Left cardiac atrium (tissue), 4 donors: ENCODE measurements at regions of chr17 and their contacts with region 1.

Region 1: DNA sequence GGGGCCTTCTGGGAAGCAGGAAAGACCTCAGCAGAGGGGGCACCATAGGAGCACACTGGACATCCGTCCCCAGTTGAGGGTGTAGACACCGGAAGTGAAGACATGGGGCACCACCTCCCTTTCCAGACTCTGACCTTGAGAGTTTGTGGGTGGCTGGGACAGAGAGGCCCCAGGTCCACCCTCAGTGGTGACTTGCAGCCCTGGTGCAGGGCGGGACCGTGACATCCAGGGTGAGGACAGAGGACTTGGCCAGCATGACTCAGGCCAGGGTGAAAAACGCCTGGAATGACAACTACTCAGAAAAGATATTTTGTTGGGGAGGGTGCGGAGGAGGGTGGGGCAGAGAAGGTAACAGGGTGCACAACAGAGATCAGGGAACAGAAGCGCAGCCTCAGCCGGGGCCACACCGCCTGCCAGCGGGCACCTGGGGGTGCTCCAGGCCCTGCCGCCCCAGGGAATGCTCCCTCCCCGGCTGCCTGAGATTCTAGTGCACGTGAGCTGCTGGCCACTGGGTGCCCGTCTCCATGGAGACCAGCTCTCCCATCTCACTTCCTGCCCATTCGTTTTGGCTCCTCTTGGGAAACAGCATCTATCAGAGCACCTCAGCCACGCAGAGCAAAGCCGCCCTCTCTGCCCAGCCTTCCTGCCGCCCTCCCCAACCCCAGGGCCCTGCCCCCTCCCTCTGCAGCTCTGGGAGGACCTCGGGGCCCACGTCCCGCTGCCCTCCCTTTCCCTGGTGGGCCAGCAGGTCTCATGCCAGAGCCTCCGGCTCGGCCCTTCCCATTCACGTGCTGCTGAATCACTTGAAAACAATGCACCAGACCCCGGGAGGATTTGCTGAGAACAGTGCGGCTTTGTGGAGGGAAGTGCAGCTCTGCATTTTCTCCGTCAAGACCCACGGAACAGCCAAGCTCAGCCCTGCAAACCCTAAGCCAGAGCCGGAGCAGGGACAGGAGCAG is 19.6 kb downstream of the CEP295NL start:
- DNase-seq: peak; percentile 84
- ATAC-seq: peak; percentile 68 to 73

Region 2: DNA sequence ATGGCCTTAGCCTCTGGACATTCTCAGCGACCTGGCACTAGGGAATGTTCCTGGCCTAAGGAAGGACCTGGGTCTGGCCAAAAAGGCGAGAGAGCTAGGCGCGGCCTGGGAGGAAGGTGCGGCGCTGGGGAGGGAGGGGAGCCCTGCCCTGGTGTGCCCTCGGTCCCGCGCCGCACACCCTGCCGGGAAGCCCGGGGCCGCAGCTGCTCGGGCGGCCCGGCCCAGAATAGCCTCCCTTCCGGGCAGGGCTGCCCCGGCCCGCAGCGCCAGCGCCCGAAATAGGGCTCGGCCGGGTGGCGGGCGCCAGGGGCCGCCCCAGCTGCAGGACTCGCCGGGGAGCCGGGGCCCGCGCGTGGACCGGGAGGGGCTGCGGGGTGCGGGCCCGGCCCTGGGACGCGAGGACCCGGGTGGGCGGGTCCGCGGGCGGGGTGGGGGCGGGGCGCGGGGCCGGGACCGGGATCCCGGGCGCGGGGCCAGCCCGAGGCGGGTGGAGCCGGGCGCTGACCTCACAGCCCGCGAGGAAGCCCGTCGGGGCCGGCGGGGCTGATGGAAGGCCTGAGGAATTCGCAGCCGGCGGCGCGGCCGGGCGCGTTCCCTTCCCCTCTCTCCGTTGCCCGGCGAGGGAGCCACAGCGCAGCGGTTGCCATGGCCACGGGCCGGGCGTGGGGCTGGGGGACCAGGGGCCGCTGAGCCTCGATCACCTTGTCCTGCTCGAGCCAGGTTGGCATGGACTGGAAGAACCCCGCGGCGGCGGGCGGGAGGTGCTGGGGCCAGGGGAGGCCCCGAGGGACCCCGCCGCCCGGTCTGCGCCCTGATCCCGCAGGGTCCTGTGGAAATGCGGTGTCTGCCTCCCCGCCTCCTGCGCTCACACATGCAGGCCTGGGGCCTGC is 541.6 kb before region 1 on chr17:
- intact Hi-C with region 1: no loop called
- DNase-seq: peak; percentile 89
- ATAC-seq: peak; percentile 70 to 82

Region 3: DNA sequence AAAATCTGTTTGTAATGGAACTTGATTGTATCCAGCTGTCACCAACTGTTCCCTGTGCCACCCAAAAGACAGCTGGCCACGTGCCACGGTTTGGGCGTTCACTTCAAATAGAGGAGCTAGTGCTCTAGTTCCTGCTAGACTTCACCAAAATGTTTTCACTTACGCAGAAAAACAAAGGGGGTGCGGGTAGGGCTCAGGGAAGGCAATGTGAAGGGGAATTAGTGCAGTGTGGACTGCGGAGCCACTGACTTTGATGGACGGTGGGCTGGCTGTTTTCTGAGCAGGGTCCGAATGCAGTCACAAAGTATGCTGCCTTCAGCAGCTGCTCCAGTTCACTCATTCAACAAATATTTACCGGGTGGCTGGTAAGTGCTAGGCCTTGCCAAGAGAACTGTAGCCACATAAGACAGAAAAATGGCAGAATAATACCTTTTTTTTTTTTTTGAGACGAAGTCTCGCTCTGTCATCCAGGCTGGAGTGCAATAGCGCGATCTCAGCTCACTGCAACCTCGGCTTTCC is 93.7 kb before region 1 on chr17:
- intact Hi-C with region 1: no loop called
- DNase-seq: peak; percentile 83
- ATAC-seq: peak; percentile 39 to 72

Region 4: GRCh38 chr17:78923660-78924453 is 40.4 kb after region 1 on chr17:
- intact Hi-C with region 1: loop called in 1 of 2 experiments (anchors 5 kb)
- DNase-seq: peak; percentile 71
- ATAC-seq: peak in 1 of 2 donors; percentile 42

Region 5: DNA sequence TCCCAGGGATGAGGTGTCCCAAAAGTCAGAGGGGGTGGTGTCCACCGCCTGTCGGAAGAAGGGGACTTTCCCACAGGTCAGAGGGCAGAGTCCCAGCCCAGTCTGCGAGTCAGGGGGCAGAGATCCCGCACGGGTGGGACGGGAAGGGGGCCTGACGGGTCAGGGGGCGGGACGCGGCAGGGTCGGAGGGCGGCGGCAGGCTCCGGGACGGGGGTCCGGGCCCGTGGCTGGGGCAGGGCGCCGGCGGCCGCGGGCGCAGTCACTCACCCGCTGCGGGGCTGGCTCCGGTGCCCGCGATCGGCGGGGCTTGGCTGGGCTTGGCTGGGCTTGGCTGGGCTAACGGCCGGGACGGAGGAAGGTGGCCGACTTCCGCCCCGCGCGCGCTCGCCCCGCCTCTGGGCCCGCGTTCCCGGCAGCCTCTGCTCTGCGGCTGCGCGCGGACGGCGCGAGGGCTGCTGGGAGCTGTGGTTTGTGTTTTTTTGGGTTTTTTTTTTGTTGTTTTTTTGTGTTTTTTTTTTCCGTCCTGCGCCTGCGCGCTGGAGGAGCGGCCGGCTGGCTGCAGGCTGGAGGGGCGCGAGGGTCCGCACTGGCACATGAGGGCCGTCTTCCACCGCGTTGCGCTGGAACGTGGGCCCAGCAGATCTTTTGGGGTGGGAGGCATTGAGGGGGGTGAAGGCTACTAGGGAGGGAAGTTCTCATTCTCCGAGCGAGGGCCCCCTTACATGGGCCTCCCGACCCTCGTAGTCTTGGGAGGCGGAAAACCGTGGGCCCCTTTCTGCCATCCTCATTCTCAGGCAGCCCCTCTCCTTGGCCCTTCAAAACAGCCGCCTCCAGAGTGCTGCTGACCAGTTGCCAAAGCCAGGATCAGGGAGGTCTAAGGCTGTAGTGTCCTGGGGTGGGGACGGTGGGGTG is 126.2 kb after region 1 on chr17 and contains the start of gene CANT1:
- intact Hi-C with region 1: no loop called
- DNase-seq: peak; percentile 90
- ATAC-seq: peak; percentile 96 to 99
- total RNA-seq, gene CANT1: 30.5 to 33.3 TPM